ENCODE measurements at regions of chr12 and their contacts with region 1.

Region 1: GRCh38 chr12:68727776-68728175 is 18.2 kb upstream of the SLC35E3 start:
- DNase-seq: no peak
- H3K4me3 Mint-ChIP-seq: no peak overlapping the region
- H3K27ac Mint-ChIP-seq: no peak overlapping the region
- H3K4me1 Mint-ChIP-seq: no peaks in the 10 kb centered on the region
- H3K27me3 Mint-ChIP-seq: no peaks in the 10 kb centered on the region

Region 2: GRCh38 chr12:68807576-68808387 is 80.0 kb after region 1 on chr12 and contains the start of gene MDM2:
- CTCF ChIA-PET with region 1: no interaction called
- POLR2A ChIA-PET with region 1: no interaction called
- DNase-seq: peak; percentile 98
- H3K4me3 Mint-ChIP-seq: peak within 1 kb of the TSS; percentile 93
- H3K27ac Mint-ChIP-seq: peak within 1 kb of the TSS; percentile 100
- H3K4me1 Mint-ChIP-seq: peaks cover 53% of the 10 kb centered on the region
- H3K27me3 Mint-ChIP-seq: no peaks in the 10 kb centered on the region
- total RNA-seq, gene MDM2: 207 to 214 TPM

Region 3: DNA sequence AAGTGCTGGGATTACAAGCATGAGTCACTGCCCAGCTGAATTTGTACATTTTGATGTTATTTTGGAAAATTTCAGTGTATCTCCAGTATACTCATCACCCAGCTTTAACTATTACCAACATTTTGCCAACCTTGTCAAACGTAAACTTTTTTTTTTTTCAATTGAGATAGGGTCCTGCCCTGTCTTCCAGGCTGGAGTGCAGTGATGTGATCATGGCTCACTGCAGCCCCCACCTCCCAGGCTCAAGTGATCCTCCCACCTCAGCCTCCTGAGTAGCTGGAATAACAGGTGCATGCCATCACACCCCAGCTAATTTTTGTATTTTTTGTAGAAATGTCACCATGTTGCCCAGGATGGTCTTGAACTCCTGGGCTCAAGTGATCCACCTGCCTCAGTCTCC is 109.4 kb after region 1 on chr12:
- CTCF ChIA-PET with region 1: no interaction called
- POLR2A ChIA-PET with region 1: interaction called, 14 read pairs
- DNase-seq: no peak
- H3K4me3 Mint-ChIP-seq: no peak overlapping the region
- H3K27ac Mint-ChIP-seq: no peak overlapping the region
- H3K4me1 Mint-ChIP-seq: peaks cover 18% of the 10 kb centered on the region
- H3K27me3 Mint-ChIP-seq: no peaks in the 10 kb centered on the region